ENCODE measurements at regions of chr2 and their contacts with region 1.

Region 1: GRCh38 chr2:37414470-37414949 is 70.1 kb downstream of the QPCT start:
- DNase-seq: peak; percentile 68
- ATAC-seq: peak; percentile 76
- H3K4me3 ChIP-seq: no peak overlapping the region
- H3K4me3 Mint-ChIP-seq: no peak overlapping the region
- H3K27ac ChIP-seq: no peak overlapping the region
- H3K27ac Mint-ChIP-seq: no peak overlapping the region
- H3K4me1 ChIP-seq: no peaks in the 10 kb centered on the region
- H3K4me1 Mint-ChIP-seq: peaks cover 6% of the 10 kb centered on the region
- H3K27me3 ChIP-seq: no peaks in the 10 kb centered on the region
- H3K27me3 Mint-ChIP-seq: no peaks in the 10 kb centered on the region
- CTCF ChIP-seq: peak; percentile 87

Region 2: DNA sequence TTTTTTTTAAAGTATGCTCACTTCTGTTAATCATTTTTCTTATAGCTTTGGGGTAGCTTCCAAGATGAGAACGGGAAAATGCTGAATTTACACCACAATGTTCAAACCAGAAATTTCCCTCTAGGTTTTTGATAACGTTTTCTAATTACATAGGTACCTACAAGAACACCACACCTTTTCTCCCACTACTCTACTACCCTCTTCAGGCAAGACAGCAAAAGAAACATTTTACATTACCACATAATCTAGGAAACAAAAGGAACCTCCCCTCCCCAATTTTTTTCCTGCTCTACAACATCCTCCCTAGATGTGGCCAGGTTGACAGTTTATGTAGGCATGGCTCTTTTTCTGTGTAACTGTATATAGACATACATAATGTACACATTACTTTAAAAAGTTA is 150.7 kb before region 1 on chr2:
- CTCF ChIA-PET with region 1: no interaction called
- POLR2A ChIA-PET with region 1: no interaction called
- intact Hi-C with region 1: no loop called
- DNase-seq: no peak
- ATAC-seq: no peak
- H3K4me3 ChIP-seq: no peak overlapping the region
- H3K4me3 Mint-ChIP-seq: no peak overlapping the region
- H3K27ac ChIP-seq: no peak overlapping the region
- H3K27ac Mint-ChIP-seq: no peak overlapping the region
- H3K4me1 ChIP-seq: peaks cover 10 to 14% of the 10 kb centered on the region in 2 donors
- H3K4me1 Mint-ChIP-seq: peaks cover 21% of the 10 kb centered on the region
- H3K27me3 ChIP-seq: no peaks in the 10 kb centered on the region
- H3K27me3 Mint-ChIP-seq: no peaks in the 10 kb centered on the region
- CTCF ChIP-seq: no peak

Region 3: GRCh38 chr2:37549598-37549997 is 135.1 kb after region 1 on chr2:
- CTCF ChIA-PET with region 1: interaction called, 4 read pairs
- POLR2A ChIA-PET with region 1: no interaction called
- intact Hi-C with region 1: loop called (anchors 5 kb)
- DNase-seq: no peak
- ATAC-seq: no peak
- H3K4me3 ChIP-seq: no peak overlapping the region
- H3K4me3 Mint-ChIP-seq: no peak overlapping the region
- H3K27ac ChIP-seq: no peak overlapping the region
- H3K27ac Mint-ChIP-seq: peak overlapping the region; percentile 26
- H3K4me1 ChIP-seq: peaks cover 29 to 33% of the 10 kb centered on the region in 2 donors
- H3K4me1 Mint-ChIP-seq: peaks cover 43% of the 10 kb centered on the region
- H3K27me3 ChIP-seq: peaks cover 0 to 5% (median 0%) of the 10 kb centered on the region in 4 experiments
- H3K27me3 Mint-ChIP-seq: no peaks in the 10 kb centered on the region
- CTCF ChIP-seq: no peak

Region 4: DNA sequence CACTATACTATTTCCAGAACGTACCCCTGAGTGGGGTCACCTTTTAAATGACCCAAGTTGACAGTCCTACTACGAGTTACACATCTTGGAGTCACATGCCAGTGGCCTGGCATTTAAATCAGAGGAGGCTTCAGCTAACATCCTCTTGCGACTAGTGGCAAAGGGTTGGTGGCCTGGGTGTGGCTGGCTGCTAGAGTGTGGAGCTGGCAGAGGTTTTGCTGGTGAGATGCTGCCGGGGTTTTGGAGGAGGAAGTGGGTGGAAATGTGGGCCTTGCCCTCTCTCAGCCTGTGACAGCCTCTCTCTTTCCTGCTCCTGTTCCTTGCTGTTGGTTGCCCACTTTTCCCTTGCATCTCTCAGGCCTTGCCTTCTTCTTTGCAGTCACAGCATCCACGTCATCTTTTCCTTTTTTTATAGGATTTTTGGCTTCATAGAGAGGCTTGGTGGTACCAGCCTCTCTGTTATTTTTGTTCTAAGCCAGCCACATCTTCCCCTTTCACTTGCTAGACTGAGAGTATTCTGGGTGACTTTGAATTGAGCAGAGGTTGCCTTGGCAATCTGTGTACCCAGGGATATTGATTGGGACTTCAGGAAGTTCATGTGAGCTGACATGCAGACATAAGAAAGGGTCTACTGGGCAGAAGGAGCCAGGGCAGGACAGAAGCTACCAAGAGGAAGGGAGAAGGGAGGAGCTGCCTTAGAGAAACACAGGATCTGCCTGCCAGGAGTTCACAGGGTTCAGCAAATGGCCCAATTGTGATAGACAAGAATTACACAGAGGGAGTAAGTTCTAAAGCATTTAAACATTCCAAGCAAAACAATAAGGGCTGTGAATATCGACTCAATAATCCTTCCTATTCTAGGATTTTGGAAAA is 201.5 kb after region 1 on chr2:
- CTCF ChIA-PET with region 1: interaction called, 11 read pairs
- POLR2A ChIA-PET with region 1: no interaction called
- intact Hi-C with region 1: no loop called
- DNase-seq: peak; percentile 81
- ATAC-seq: peak; percentile 87
- H3K4me3 ChIP-seq: no peak overlapping the region
- H3K4me3 Mint-ChIP-seq: peak overlapping the region; percentile 46
- H3K27ac ChIP-seq: peak overlapping the region; percentile 77 to 79
- H3K27ac Mint-ChIP-seq: peak overlapping the region; percentile 94
- H3K4me1 ChIP-seq: peaks cover 28 to 30% of the 10 kb centered on the region in 2 donors
- H3K4me1 Mint-ChIP-seq: peaks cover 37% of the 10 kb centered on the region
- H3K27me3 ChIP-seq: no peaks in the 10 kb centered on the region
- H3K27me3 Mint-ChIP-seq: no peaks in the 10 kb centered on the region
- CTCF ChIP-seq: no peak

Region 5: DNA sequence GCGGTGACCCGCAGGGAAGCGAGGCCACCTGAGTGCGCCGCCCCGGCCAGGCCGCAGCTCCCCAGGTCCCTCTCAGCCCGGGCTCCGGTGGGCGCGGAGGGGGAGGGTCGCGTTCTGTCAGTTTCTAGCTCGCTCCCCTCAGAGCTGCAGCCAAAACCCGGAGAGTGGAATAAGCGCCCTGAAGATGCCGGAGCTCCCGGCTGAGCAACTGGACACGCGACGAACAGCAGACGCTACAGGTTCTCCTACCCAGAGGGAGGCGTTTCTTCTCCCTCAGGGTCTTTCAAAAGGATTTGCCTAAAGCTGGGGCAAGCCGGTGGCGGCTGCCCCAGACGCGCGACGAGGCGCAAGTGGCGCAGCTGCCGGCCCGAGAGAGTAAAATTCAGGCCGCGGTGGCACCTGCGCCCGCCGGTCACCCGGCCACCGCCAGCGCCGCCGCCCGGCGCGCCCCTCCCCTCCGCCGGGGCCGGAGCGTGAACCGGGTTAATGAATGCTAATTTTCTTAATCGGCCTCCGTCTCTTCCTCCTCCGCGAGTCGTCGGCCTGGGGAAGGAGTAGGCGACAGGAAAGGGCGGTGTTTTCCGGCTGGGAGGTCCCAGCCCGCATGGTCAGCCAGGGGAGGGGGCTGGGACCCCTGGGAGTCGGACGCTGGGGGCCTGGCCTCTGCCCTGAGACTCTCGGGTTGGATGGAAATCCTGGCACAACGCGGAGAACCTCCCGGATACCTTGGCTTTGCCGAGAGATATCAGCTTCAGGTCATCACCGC is 257.8 kb after region 1 on chr2:
- CTCF ChIA-PET with region 1: interaction called, 12 read pairs
- POLR2A ChIA-PET with region 1: no interaction called
- intact Hi-C with region 1: no loop called
- DNase-seq: peak; percentile 86
- ATAC-seq: peak; percentile 48
- H3K4me3 ChIP-seq: peak overlapping the region; percentile 44 to 92 (median 84)
- H3K4me3 Mint-ChIP-seq: peak overlapping the region; percentile 98
- H3K27ac ChIP-seq: peak overlapping the region; percentile 81 to 83
- H3K27ac Mint-ChIP-seq: peak overlapping the region; percentile 95
- H3K4me1 ChIP-seq: peaks cover 31 to 38% of the 10 kb centered on the region in 2 donors
- H3K4me1 Mint-ChIP-seq: peaks cover 52% of the 10 kb centered on the region
- H3K27me3 ChIP-seq: no peaks in the 10 kb centered on the region
- H3K27me3 Mint-ChIP-seq: no peaks in the 10 kb centered on the region
- CTCF ChIP-seq: no peak

Region 6: DNA sequence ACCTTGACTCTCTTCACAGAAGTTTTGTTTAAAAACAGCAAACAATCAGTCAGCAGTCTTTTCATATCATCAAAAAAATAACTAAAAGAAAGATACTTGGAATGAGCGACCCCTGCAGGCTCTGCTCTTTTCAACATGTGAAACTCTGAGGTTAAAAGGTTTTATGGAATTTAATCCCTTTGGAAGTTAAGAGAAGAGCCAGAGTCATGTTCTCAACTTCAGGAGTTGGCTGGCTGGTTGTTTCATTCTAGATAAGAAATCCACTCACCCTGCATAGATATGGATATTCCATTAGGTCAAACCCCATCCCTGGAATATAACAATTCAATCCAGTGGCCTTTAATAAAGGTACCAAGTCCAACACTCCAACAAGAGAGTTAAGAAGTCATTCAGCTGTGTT is 395.0 kb after region 1 on chr2:
- CTCF ChIA-PET with region 1: interaction called, 9 read pairs
- POLR2A ChIA-PET with region 1: no interaction called
- intact Hi-C with region 1: loop called (anchors 1 kb)
- DNase-seq: no peak
- ATAC-seq: no peak
- H3K4me3 ChIP-seq: no peak overlapping the region
- H3K4me3 Mint-ChIP-seq: no peak overlapping the region
- H3K27ac ChIP-seq: no peak overlapping the region
- H3K27ac Mint-ChIP-seq: no peak overlapping the region
- H3K4me1 ChIP-seq: no peaks in the 10 kb centered on the region
- H3K4me1 Mint-ChIP-seq: no peaks in the 10 kb centered on the region
- H3K27me3 ChIP-seq: no peaks in the 10 kb centered on the region
- H3K27me3 Mint-ChIP-seq: peaks cover 5% of the 10 kb centered on the region
- CTCF ChIP-seq: peak; percentile 39

Region 7: DNA sequence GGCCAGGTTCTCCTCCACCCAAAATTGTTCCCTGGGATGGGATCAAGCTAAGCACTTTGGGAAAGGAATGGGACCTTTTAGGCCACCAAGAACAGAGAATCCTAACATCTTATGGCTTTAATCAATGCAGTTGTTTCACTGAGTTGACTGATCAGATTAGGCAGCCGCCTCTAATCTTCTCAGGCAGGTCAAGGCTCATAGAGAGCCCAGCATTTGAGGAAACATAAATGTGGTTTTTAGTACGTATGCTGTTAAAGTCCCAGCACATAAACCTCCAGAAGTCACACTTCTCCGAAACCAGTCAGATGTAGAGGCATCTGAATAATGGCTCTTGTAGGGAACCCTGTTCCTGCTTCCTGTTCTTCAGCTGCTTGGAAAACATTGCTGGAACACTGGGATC is 411.1 kb after region 1 on chr2:
- CTCF ChIA-PET with region 1: interaction called, 517 read pairs
- POLR2A ChIA-PET with region 1: no interaction called
- intact Hi-C with region 1: no loop called
- DNase-seq: no peak
- ATAC-seq: no peak
- H3K4me3 ChIP-seq: no peak overlapping the region
- H3K4me3 Mint-ChIP-seq: no peak overlapping the region
- H3K27ac ChIP-seq: no peak overlapping the region
- H3K27ac Mint-ChIP-seq: no peak overlapping the region
- H3K4me1 ChIP-seq: peaks cover 7 to 13% of the 10 kb centered on the region in 2 donors
- H3K4me1 Mint-ChIP-seq: peaks cover 8% of the 10 kb centered on the region
- H3K27me3 ChIP-seq: no peaks in the 10 kb centered on the region
- H3K27me3 Mint-ChIP-seq: no peaks in the 10 kb centered on the region
- CTCF ChIP-seq: no peak